CD4-positive, alpha-beta T cell (primary cell): ENCODE measurements at regions of chr20 and their contacts with region 1.

Region 1: GRCh38 chr20:8255945-8256632 is 124.0 kb downstream of the PLCB1 start:
- DNase-seq: no peak
- ATAC-seq: no peak
- H3K4me3 ChIP-seq: no peak overlapping the region
- H3K4me3 Mint-ChIP-seq: no peak overlapping the region
- H3K27ac ChIP-seq: no peak overlapping the region
- H3K27ac Mint-ChIP-seq: no peak overlapping the region
- H3K4me1 ChIP-seq: no peaks in the 10 kb centered on the region
- H3K4me1 Mint-ChIP-seq: no peaks in the 10 kb centered on the region
- H3K27me3 ChIP-seq: no peaks in the 10 kb centered on the region
- H3K27me3 Mint-ChIP-seq: no peaks in the 10 kb centered on the region
- CTCF ChIP-seq: no peak

Region 2: GRCh38 chr20:8194721-8195120 is 61.4 kb before region 1 on chr20:
- CTCF ChIA-PET with region 1: no interaction called
- POLR2A ChIA-PET with region 1: no interaction called
- intact Hi-C with region 1: no loop called
- DNase-seq: no peak
- ATAC-seq: no peak
- H3K4me3 ChIP-seq: no peak overlapping the region
- H3K4me3 Mint-ChIP-seq: no peak overlapping the region
- H3K27ac ChIP-seq: no peak overlapping the region
- H3K27ac Mint-ChIP-seq: no peak overlapping the region
- H3K4me1 ChIP-seq: no peaks in the 10 kb centered on the region
- H3K4me1 Mint-ChIP-seq: no peaks in the 10 kb centered on the region
- H3K27me3 ChIP-seq: no peaks in the 10 kb centered on the region
- H3K27me3 Mint-ChIP-seq: no peaks in the 10 kb centered on the region
- CTCF ChIP-seq: no peak

Region 3: GRCh38 chr20:8326191-8326590 is 70.1 kb after region 1 on chr20:
- CTCF ChIA-PET with region 1: no interaction called
- POLR2A ChIA-PET with region 1: no interaction called
- intact Hi-C with region 1: loop called in 1 of 2 experiments (anchors 2 kb)
- DNase-seq: no peak
- ATAC-seq: no peak
- H3K4me3 ChIP-seq: no peak overlapping the region
- H3K4me3 Mint-ChIP-seq: no peak overlapping the region
- H3K27ac ChIP-seq: no peak overlapping the region
- H3K27ac Mint-ChIP-seq: no peak overlapping the region
- H3K4me1 ChIP-seq: no peaks in the 10 kb centered on the region
- H3K4me1 Mint-ChIP-seq: no peaks in the 10 kb centered on the region
- H3K27me3 ChIP-seq: no peaks in the 10 kb centered on the region
- H3K27me3 Mint-ChIP-seq: no peaks in the 10 kb centered on the region
- CTCF ChIP-seq: no peak

Region 4: DNA sequence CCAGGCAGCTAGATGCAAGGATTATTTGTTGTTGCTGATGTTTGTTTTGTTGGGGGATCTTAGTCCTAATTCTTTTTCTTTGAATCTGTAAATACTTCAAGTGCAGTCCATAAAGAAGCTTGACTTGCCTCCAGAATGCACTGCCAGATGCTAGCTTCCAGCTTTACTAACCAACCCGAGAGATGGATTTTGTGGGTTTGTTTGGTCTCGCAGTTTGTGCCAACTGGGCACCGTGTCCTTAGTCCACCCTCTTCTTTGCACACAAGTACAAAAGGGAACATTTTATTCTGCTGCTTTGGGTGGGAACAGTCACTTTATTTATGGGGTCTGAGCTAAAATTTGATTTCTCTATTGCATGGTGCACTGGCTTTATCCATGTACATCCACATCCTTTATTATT is 88.0 kb after region 1 on chr20:
- CTCF ChIA-PET with region 1: no interaction called
- POLR2A ChIA-PET with region 1: no interaction called
- intact Hi-C with region 1: no loop called
- DNase-seq: no peak
- ATAC-seq: no peak
- H3K4me3 ChIP-seq: no peak overlapping the region
- H3K4me3 Mint-ChIP-seq: no peak overlapping the region
- H3K27ac ChIP-seq: no peak overlapping the region
- H3K27ac Mint-ChIP-seq: no peak overlapping the region
- H3K4me1 ChIP-seq: no peaks in the 10 kb centered on the region
- H3K4me1 Mint-ChIP-seq: no peaks in the 10 kb centered on the region
- H3K27me3 ChIP-seq: no peaks in the 10 kb centered on the region
- H3K27me3 Mint-ChIP-seq: no peaks in the 10 kb centered on the region
- CTCF ChIP-seq: no peak